Breast epithelium (tissue), 4 donors: ENCODE measurements at regions of chr16 and their contacts with region 1.

Region 1: DNA sequence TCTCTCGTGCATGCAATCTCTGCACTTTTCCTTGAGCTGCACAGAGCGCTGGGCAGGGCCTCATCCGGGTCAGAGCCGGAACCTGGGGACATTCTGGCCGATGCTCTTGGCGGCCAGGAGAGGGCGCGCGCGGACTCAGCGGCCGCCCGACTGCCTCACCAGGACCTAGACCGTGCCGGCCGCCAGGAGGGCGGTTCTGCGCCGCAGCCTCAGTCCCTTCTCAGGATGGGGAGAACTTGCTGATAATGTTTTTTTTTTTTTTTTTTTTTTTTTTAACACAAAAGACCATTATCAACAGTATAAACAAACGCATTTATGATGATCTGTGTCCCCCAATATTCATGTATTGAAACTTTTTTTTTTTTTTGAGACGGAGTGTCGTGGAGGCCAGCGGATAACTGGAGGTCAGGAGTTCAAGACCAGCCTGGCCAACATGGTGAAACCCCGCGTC is 8.1 kb upstream of the FLYWCH2 start:
- DNase-seq: peak; percentile 75 to 79
- H3K4me3 ChIP-seq: no peak overlapping the region
- H3K27ac ChIP-seq: no peak overlapping the region
- H3K4me1 ChIP-seq: no peaks in the 10 kb centered on the region
- H3K27me3 ChIP-seq: no peaks in the 10 kb centered on the region
- CTCF ChIP-seq: peak; percentile 86 to 98 (median 97)
- POLR2A ChIP-seq: no peak

Region 2: DNA sequence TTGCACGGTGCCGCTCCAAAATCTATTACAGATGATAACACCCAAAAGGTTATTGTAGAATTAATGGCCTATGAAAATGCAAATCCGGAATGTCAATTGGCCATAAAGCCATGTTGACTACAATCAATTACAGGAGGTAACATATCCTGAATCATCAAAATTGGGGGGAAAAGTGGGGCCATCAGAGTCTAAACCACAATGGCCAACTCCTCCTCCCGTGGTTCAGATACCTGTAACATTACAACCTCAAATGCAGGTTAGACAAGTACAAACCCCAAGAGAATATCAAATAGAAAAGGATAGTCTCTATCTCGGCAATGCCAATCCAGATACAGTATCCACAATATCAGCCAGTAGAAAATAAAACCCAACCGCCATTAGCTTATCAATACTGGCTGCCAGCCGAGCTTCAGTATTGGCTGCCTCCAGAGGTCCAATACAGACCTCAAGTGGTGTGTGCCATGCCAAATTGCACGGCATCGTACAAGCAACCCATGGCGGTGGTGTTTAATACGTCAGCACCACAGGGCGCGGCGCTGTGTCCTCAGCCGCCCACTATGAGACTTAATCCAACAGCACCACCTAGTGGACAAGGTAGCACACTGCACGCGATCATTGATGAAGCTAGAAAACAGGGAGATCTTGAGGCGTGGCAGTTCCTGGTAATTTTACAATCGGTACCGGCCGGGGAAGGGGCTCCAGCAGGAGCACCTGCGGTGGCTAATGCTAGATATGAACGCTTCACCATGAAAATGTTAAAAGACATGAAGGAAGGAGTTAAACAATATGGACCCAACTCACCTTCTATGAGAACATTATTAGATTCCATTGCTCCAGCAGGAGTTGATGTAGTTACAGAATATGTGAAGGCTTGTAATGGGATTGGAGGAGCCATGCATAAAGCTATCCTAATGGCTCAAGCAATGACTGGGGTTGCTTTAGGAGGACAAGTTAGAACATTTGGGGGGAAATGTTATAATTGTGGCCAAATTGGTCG is 52.0 kb after region 1 on chr16:
- intact Hi-C with region 1: loop called (anchors 10 kb)
- DNase-seq: peak; percentile 81 to 86
- H3K4me3 ChIP-seq: peak overlapping the region in 2 of 3 donors; percentile 30 to 47
- H3K27ac ChIP-seq: peak overlapping the region in 1 of 2 donors; percentile 16
- H3K4me1 ChIP-seq: no peaks in the 10 kb centered on the region
- H3K27me3 ChIP-seq: no peaks in the 10 kb centered on the region
- CTCF ChIP-seq: peak; percentile 93 to 96 (median 94)
- POLR2A ChIP-seq: no peak